Left cardiac atrium (tissue), 4 donors: ENCODE measurements at regions of chr3 and their contacts with region 1.

Region 1: DNA sequence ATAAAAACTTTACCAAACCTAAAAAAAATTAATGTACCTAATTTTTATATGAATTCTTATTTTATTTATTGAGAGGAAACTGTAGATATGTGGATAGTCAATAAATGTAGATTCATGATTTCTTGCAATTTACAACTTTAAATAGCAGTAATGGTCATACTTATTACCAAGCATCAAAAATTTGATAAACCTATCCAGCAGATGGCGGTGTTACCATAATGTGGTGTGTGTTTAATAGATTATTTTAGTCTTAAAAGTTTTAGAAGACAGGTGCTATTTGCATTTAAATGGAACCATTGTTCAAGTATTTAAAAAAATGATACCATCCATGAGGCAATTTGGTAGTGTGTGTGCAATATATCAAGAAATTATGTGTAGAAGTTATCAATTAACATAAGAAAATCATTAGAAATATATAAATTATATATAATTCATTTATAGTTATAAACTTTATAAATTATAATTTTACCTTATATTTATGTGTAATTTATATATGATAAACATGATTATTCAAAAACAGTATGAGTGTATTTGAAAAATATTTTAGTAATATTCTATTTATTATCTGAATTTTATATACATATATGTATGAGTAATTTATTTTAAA is 176.0 kb upstream of the BCHE start:
- DNase-seq: no peak
- ATAC-seq: no peak

Region 2: DNA sequence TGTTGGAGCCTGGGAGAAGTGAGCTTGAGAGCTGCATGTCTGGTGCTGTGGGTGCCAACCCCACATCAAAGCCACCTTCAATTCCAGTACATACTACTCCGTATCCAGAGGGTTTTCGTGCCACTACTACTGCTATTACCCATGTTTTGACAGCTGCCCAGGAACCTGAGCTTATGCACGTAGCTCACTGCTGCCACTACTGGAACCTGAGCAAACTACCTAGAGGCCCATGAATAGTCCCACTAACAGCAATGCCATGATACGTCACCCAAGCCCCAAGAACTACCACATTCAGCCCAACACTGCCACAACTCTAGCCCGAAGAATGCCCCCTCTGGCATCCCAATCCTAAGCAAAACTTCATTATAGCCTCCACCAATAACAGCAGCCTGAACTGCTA is 39.3 kb after region 1 on chr3:
- intact Hi-C with region 1: no loop called
- DNase-seq: no peak
- ATAC-seq: no peak

Region 3: DNA sequence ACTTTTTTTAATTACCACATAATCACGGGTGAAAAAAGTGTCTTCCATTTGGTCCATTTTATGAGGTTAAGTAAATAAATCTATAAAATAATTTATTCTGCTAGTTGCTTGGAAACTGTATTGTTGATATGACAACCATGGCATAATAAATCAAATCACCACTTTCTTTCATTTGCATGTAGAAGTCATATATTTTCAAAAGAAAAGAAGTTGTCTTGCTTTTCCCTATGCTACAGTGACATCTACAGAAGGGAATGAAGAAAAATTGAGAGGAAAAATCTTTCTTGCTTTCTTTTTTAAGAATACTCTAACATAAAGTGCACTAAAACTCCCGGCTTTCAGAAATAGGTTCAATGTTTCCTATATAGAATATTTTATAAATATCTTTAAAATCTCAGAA is 1138.5 kb after region 1 on chr3:
- intact Hi-C with region 1: loop called in 1 of 2 experiments (anchors 10 kb)
- DNase-seq: no peak
- ATAC-seq: no peak

Region 4: GRCh38 chr3:167346171-167346570 is 1333.0 kb after region 1 on chr3:
- intact Hi-C with region 1: loop called in 1 of 2 experiments (anchors 5 kb)
- DNase-seq: no peak
- ATAC-seq: no peak